ENCODE measurements at regions of chr11 and their contacts with region 1.

Region 1: DNA sequence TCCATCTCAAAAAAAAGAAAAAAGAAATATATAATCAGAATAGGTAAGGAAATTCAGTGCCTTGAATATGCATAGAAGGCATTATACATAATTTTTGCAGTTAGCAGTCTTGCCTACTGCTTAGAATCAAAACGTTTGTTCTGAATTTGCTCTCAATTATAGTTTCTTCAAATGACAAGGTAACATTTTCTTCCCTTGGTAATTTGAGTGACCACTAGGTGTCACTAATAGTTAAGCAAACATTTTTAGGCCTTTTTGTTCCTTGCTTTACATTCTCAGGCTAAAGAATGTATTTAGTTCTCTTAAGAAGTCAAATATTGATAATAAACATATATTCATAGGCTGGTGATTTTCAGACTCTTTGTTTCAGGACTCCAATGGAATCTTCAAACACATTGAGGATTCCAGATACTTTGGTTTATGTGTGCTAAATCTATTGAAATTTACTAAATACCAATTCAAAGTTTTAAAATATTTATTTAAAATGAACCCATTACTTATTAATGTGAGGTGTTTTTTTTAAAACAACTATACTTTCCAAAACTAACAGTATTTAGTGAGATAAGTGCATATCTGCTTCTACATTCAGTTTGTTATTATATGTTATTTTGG is 55.0 kb upstream of the DEPDC7 start:
- DNase-seq: no peak
- H3K4me3 ChIP-seq: no peak overlapping the region
- H3K27ac ChIP-seq: no peak overlapping the region
- H3K4me1 ChIP-seq: no peaks in the 10 kb centered on the region
- H3K27me3 ChIP-seq: no peaks in the 10 kb centered on the region
- CTCF ChIP-seq: peak; percentile 35 to 59 (median 56)
- POLR2A ChIP-seq: no peak

Region 2: GRCh38 chr11:33065445-33066178 is 105.0 kb after region 1 on chr11:
- intact Hi-C with region 1: loop called (anchors 5 kb)
- DNase-seq: peak; percentile 29 to 62
- H3K4me3 ChIP-seq: no peak overlapping the region
- H3K27ac ChIP-seq: no peak overlapping the region
- H3K4me1 ChIP-seq: no peaks in the 10 kb centered on the region
- H3K27me3 ChIP-seq: no peaks in the 10 kb centered on the region
- CTCF ChIP-seq: peak; percentile 49 to 70 (median 50)
- POLR2A ChIP-seq: no peak

Measured in breast epithelium (tissue), 4 donors.